Activated CD8-positive, alpha-beta T cell treated with anti-CD3 and anti-CD28 coated beads, Interleukin-2, amount 10 ng/mL, durations not matched to agents 7 days and 5 days (primary cell): ENCODE measurements at regions of chr16 and their contacts with region 1.

Region 1: DNA sequence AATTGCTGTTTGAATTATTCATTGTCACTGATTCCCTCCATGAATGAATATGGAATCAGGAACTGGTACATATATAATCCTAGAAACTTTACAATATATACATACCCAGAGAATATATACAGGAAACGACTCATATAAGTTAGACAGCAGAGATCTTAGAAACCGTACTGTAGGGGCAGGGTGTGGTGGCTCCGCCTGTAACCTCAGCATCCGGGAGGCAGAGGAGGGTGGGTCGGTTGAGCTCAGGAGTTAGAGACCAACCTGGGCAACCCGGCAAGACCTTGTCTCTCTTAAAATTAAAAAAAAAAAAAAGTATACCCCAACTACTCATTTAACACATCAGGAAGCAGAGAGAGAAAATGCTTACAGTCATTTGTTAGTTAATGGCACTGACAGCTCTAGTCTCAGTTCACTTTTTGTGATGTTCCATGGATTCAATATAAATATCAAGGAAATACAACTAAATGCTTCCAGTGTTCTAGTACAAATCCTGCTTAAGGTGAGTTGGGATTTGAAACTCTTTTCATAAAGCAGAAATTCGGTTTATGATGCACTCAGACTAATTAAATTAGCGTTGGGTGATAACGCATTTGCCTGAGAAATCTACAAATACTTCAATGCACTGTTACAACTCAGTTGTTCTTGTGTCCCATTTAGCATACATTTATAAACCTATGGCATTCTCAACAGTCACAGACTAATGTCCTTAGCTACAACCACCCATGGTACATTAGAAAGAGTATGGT is 5.6 kb downstream of the GLG1 start:
- DNase-seq: peak; percentile 89
- ATAC-seq: peak; percentile 97
- H3K4me3 Mint-ChIP-seq: peak overlapping the region; percentile 70
- H3K27ac Mint-ChIP-seq: peak overlapping the region; percentile 87
- H3K4me1 Mint-ChIP-seq: peaks cover 72% of the 10 kb centered on the region
- H3K27me3 Mint-ChIP-seq: no peaks in the 10 kb centered on the region

Region 2: GRCh38 chr16:74623214-74623842 is 22.0 kb after region 1 on chr16:
- CTCF ChIA-PET with region 1: interaction called, 10 read pairs
- POLR2A ChIA-PET with region 1: interaction called, 5 read pairs
- DNase-seq: no peak
- ATAC-seq: peak; percentile 50
- H3K4me3 Mint-ChIP-seq: no peak overlapping the region
- H3K27ac Mint-ChIP-seq: peak overlapping the region; percentile 31
- H3K4me1 Mint-ChIP-seq: peaks cover 11% of the 10 kb centered on the region
- H3K27me3 Mint-ChIP-seq: no peaks in the 10 kb centered on the region